Activated CD8-positive, alpha-beta memory T cell treated with anti-CD3 and anti-CD28 coated beads, Interleukin-2, amount 10 ng/mL, durations not matched to agents 7 days and 5 days (primary cell): ENCODE measurements at regions of chr15 and their contacts with region 1.

Region 1: DNA sequence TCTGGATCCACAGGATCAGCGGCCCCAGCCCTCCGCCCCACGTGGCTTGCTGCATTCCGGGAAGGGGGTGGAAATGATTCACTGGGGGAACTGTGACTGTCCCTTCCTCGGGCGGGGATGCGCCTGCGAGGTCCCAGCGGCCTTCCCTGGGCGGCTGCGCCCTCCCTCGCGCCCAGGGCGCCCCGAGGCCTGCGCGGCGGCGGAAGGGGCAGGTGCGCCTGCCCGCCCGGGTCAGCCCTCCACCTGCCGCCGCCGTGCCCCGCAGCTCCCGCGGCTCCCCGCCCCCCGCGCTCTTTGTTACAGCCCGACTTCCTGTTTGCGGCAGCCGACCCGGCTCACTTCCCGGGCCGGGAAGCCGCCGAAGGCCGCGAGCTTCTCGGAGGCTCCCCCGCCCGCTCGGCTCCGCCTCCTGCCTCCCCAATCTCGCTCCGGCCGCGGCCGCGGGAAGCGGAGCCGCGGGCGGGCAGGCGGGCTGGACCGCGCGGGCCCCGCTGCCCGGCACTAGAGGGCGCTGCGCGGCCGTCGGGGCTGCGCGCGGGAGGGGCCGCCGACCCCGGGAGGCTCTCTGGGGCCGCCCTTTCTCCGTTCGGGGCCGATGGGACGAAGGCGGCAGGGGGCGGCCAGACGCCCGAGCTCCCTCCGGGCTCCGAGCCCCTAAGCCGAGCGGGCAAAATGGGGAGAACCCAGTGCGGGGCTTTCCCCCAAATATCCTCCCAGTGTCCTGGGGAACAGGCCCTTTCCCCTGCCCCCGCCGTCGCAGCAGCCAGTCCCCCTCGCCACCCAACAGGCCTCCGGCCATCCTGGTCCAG is 11.5 kb upstream of the CHAC1 start:
- DNase-seq: peak; percentile 76
- ATAC-seq: peak; percentile 90
- H3K4me3 Mint-ChIP-seq: peak overlapping the region; percentile 74
- H3K27ac Mint-ChIP-seq: no peak overlapping the region
- H3K4me1 Mint-ChIP-seq: peaks cover 32% of the 10 kb centered on the region
- H3K27me3 Mint-ChIP-seq: peaks cover 4% of the 10 kb centered on the region

Region 2: GRCh38 chr15:40782580-40783227 is 159.0 kb before region 1 on chr15:
- CTCF ChIA-PET with region 1: no interaction called
- DNase-seq: peak; percentile 86
- ATAC-seq: peak; percentile 99
- H3K4me3 Mint-ChIP-seq: no peak overlapping the region
- H3K27ac Mint-ChIP-seq: peak overlapping the region; percentile 30
- H3K4me1 Mint-ChIP-seq: peaks cover 18% of the 10 kb centered on the region
- H3K27me3 Mint-ChIP-seq: no peaks in the 10 kb centered on the region

Region 3: GRCh38 chr15:40843885-40844695 is 97.6 kb before region 1 on chr15 and contains the start of gene SPINT1:
- CTCF ChIA-PET with region 1: no interaction called
- DNase-seq: peak; percentile 54
- ATAC-seq: peak; percentile 72
- H3K4me3 Mint-ChIP-seq: peak within 1 kb of the TSS; percentile 78
- H3K27ac Mint-ChIP-seq: no peak within 1 kb of the TSS
- H3K4me1 Mint-ChIP-seq: peaks cover 25% of the 10 kb centered on the region
- H3K27me3 Mint-ChIP-seq: peaks cover 22% of the 10 kb centered on the region
- total RNA-seq, gene SPINT1: 3.7 to 4.0 TPM

Region 4: DNA sequence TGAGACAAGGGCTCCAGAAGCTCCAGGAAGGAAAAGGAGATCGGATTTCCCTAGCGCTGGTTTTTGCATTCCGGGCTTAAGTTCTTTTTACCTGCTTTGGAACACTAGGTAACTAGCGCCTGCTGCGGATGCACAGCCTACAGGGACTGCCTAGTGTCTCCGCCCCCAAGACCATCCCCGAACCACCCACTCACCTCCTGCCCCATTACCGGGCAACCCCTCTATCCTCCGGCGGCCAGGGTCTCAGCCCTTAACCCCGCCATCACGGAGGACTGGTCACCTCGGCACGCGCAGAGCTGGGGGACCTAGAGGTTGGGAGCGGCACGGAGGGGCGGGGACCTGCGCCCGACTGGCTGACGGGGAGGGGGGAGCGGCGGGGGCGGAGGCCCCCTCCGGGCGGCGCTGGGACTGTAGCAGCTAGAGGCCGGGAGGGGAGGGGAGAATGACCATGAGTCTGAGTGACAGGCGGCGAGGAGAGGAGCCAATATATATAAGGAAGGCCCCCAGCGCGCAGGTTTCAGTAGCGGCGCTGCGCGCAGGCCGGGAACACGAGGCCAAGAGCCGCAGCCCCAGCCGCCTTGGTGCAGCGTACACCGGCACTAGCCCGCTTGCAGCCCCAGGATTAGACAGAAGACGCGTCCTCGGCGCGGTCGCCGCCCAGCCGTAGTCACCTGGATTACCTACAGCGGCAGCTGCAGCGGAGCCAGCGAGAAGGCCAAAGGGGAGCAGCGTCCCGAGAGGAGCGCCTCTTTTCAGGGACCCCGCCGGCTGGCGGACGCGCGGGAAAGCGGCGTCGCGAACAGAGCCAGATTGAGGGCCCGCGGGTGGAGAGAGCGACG is 12.7 kb before region 1 on chr15 and contains the start of gene DLL4:
- CTCF ChIA-PET with region 1: interaction called, 75 read pairs
- DNase-seq: peak; percentile 54
- ATAC-seq: peak; percentile 42
- H3K4me3 Mint-ChIP-seq: peak within 1 kb of the TSS; percentile 47
- H3K27ac Mint-ChIP-seq: peak within 1 kb of the TSS; percentile 19
- H3K4me1 Mint-ChIP-seq: peaks cover 48% of the 10 kb centered on the region
- H3K27me3 Mint-ChIP-seq: peaks cover 77% of the 10 kb centered on the region
- total RNA-seq, gene DLL4: 0.12 TPM in 1 of 2 experiments, not detected in the other

Region 5: GRCh38 chr15:40952901-40953712 is 11.4 kb after region 1 on chr15 and contains the start of gene CHAC1:
- CTCF ChIA-PET with region 1: interaction called, 102 read pairs
- DNase-seq: peak; percentile 98
- ATAC-seq: peak; percentile 93
- H3K4me3 Mint-ChIP-seq: peak within 1 kb of the TSS; percentile 83
- H3K27ac Mint-ChIP-seq: peak within 1 kb of the TSS; percentile 88
- H3K4me1 Mint-ChIP-seq: peaks cover 29% of the 10 kb centered on the region
- H3K27me3 Mint-ChIP-seq: no peaks in the 10 kb centered on the region
- total RNA-seq, gene CHAC1: 8.3 to 13.0 TPM

Region 6: GRCh38 chr15:41022487-41023090 is 80.9 kb after region 1 on chr15:
- CTCF ChIA-PET with region 1: interaction called, 14 read pairs
- DNase-seq: peak; percentile 58
- ATAC-seq: no peak
- H3K4me3 Mint-ChIP-seq: no peak overlapping the region
- H3K27ac Mint-ChIP-seq: no peak overlapping the region
- H3K4me1 Mint-ChIP-seq: peaks cover 3% of the 10 kb centered on the region
- H3K27me3 Mint-ChIP-seq: no peaks in the 10 kb centered on the region

Region 7: DNA sequence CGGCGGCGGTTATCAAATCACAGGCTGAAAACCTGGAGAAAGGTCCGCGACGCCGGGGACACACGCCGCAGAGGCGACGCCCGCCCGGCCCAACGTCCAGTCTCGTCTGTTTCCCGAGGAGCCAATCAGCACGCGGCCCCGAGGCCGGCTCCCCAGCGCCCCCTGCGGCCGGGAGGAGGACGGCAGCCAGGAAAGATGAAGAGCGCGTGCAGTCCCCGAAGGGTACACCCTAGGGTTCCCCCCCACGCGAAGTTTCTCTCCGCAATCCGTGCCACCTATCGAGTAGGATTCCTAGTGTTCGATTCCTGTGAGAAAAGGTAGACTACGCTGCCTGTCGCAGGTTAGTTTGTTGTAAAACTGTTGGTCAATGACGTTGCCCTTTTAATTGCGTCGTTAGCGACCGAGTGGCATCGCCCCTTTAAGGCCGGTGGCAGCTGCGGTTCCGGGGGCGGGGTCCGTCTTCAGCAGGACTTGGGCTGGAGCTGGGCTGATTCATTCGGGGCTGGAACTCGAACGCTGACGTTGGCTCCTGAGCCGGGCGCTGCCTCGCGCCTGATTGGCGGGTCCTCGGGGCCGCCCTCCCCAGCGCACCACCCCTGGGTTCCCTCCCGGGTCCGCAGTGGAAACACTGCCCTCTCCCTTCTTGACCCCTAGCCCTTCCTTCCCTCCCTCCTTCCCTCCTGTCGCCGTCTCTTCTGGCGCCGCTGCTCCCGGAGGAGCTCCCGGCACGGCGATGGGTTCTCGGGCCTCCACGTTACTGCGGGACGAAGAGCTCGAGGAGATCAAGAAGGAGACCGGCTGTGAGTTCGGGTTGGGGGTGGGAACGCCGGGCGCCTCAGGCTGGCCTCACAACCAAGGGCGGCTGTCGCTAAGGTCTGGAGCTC is 289.2 kb after region 1 on chr15 and contains the starts of genes CHP1 and EXD1:
- CTCF ChIA-PET with region 1: interaction called, 15 read pairs
- DNase-seq: peak; percentile 98
- ATAC-seq: peak; percentile 100
- H3K4me3 Mint-ChIP-seq: peak within 1 kb of the TSS; percentile 88
- H3K27ac Mint-ChIP-seq: peak within 1 kb of the TSS; percentile 86
- H3K4me1 Mint-ChIP-seq: peaks cover 25% of the 10 kb centered on the region
- H3K27me3 Mint-ChIP-seq: peaks cover 17% of the 10 kb centered on the region
- total RNA-seq, gene CHP1: 47.5 to 54.1 TPM
- total RNA-seq, gene EXD1: not detected